Activated naive CD4-positive, alpha-beta T cell treated with anti-CD3 and anti-CD28 coated beads for 36 hours (primary cell): ENCODE measurements at regions of chr12 and their contacts with region 1.

Region 1: DNA sequence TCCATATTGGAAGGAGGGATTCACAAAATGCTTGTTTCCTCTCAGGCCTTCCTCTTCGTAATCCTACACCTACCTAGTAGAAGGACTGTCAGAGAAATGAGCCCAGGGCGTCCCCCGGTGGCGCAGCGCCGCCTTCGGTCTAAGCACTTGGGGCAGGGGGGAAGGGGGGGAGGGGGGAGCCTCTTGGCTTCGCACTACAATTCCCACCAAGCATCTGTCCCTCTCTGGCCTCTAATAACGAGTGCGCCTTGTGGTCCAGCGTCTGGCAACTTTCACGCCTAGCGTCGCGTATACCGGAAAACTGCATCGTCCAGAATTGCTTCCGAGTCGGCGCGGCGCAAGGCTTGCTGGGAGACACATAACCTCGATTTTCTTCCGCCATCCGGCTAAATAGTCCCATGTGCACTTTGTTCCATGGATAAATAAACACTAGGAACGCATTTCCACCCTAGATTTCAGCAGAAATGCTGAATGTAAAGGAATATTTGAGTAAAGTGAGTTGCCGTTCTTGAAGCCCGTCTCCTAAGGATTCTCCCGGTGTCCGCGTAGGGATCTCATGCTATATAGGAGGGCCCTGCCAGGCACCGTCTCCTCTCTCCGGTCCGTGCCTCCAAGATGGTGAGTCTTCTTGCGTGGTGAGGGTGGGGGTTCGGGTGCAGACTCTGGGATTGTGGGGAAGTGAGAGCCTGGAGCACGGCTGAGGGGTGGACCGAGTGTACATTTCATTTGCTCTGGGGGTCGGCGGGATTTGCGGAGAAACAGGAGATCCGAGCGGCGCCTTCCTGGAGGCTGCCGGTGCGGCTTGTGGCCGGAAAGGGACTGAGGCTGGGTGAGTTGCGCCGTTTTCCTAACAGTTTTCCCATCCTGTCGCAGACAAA is at the start of gene RPS26:
- DNase-seq: peak; percentile 96
- H3K4me3 Mint-ChIP-seq: peak within 1 kb of the TSS; percentile 96
- H3K27ac Mint-ChIP-seq: peak within 1 kb of the TSS; percentile 98
- H3K4me1 Mint-ChIP-seq: peaks cover 57% of the 10 kb centered on the region
- H3K27me3 Mint-ChIP-seq: no peaks in the 10 kb centered on the region
- total RNA-seq, gene RPS26: 31.0 to 37.3 TPM

Region 2: DNA sequence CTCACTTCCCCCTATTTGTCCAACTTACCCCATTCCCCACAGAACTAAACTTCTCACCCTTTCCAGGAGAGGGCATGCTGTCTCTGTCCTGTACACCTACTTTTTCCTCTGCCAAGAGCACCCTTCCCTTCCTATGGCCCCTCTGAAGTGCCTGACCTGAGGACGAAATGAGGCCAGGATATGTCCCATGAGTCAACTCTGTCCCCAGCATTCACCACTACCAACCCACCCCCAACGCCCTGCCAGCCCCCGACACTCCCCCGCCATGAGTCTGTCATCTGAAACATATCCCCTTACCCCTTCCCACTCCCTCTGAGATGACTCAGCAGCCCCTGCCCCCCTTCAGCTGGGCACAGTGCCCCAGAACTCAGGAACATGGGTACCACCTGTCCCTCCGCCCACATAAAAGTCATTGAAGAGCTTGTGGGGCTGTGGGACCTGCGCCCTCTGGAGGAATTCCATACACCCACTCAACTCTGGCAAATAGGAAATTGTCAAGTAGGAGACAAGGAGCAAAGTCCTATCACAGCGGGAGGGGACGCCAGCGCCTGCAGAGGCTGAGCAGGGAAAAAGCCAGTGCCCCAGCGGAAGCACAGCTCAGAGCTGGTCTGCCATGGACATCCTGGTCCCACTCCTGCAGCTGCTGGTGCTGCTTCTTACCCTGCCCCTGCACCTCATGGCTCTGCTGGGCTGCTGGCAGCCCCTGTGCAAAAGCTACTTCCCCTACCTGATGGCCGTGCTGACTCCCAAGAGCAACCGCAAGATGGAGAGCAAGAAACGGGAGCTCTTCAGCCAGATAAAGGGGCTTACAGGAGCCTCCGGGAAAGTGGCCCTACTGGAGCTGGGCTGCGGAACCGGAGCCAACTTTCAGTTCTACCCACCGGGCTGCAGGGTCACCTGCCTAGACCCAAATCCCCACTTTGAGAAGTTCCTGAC is 360.4 kb before region 1 on chr12:
- CTCF ChIA-PET with region 1: no interaction called
- intact Hi-C with region 1: no loop called
- DNase-seq: no peak
- H3K4me3 Mint-ChIP-seq: no peak overlapping the region
- H3K27ac Mint-ChIP-seq: no peak overlapping the region
- H3K4me1 Mint-ChIP-seq: peaks cover 6% of the 10 kb centered on the region
- H3K27me3 Mint-ChIP-seq: peaks cover 16% of the 10 kb centered on the region

Region 3: GRCh38 chr12:55829967-55830600 is 211.7 kb before region 1 on chr12:
- CTCF ChIA-PET with region 1: no interaction called
- intact Hi-C with region 1: loop called (anchors 1 kb)
- DNase-seq: peak; percentile 24
- H3K4me3 Mint-ChIP-seq: peak overlapping the region; percentile 96
- H3K27ac Mint-ChIP-seq: peak overlapping the region; percentile 87
- H3K4me1 Mint-ChIP-seq: peaks cover 52% of the 10 kb centered on the region
- H3K27me3 Mint-ChIP-seq: no peaks in the 10 kb centered on the region

Region 4: DNA sequence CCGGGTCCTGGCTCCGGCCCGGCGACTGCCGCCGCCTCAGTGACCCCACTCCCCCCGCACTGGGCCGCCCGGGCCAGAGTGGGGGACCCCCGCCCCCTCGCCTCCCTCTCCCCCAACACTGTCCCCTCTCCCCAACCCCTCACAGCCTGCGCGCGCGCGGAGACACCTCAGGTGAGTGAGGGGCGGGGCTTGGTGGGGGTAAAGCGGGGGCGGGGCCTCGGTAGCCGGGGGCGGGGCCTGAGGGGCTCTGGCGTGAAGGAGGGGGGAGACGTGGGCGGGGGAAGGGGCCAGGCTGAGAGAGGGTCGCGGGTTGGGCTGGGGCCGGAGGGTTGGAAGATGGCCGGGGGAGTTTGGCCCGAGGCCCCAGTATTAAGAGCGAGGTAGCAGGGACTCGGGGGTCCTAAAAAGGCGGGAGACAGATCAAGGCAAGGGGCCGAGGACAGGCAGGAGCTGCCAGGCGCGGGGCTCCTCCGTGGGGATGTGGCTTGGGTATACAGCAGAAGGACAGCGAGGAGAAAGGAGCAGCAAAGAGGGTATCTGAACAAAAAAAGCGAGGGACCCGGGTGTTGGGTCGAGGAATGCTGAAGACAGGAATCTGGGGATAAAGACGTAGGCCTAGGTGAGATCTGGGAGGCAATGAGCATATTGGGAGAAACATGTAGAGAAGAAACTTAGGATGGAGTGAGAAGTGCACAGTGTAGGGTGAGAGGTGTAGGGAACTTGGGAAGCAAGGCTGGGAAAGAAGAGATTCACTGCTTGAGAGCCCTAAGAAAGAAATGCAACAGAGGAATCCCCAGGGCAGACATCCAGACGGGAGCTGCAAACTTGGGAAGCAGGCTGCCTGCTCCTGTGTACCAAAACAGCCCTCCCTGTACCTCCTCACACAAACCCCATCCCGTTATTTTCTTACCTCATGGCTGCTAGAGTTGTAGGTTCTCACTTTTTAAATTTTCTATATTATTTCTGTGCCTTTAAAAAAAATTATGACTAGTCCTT is 33.9 kb before region 1 on chr12:
- CTCF ChIA-PET with region 1: interaction called, 4 read pairs
- intact Hi-C with region 1: loop called (anchors 1 kb)
- DNase-seq: peak; percentile 64
- H3K4me3 Mint-ChIP-seq: peak overlapping the region; percentile 90
- H3K27ac Mint-ChIP-seq: peak overlapping the region; percentile 76
- H3K4me1 Mint-ChIP-seq: peaks cover 22% of the 10 kb centered on the region
- H3K27me3 Mint-ChIP-seq: no peaks in the 10 kb centered on the region

Region 5: GRCh38 chr12:56029666-56030293 is 12.0 kb before region 1 on chr12:
- CTCF ChIA-PET with region 1: interaction called, 19 read pairs
- intact Hi-C with region 1: no loop called
- DNase-seq: peak; percentile 65
- H3K4me3 Mint-ChIP-seq: no peak overlapping the region
- H3K27ac Mint-ChIP-seq: no peak overlapping the region
- H3K4me1 Mint-ChIP-seq: peaks cover 24% of the 10 kb centered on the region
- H3K27me3 Mint-ChIP-seq: no peaks in the 10 kb centered on the region